T-cell (primary cell): ENCODE measurements at regions of chr16 and their contacts with region 1.

Region 1: DNA sequence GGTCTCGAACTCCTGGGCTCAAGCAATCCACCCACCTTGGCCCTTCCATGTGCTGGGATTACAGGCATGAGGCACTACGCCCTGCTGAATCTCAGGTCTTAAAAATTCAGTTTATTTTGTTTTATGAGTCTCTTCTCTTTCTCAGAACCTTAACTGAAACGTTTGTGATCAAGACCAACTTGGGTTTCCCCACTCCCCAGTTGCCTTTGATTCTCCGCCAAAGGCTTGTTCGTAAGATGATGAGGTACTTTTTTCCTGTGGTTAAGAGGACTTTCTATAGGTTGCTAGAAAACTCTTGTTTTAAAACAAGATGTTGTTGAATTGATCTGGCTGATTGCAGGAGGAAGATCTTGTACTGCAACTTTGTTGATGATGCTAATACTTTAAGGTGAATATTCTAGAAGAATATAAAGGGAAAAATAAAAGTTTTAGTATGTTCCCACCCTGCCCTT is 11.7 kb downstream of the ABCC1 start:
- DNase-seq: peak; percentile 19 to 93 (median 77)
- ATAC-seq: peak; percentile 87 to 94 (median 92)
- H3K4me3 ChIP-seq: peak overlapping the region; percentile 27 to 36
- H3K4me3 Mint-ChIP-seq: peak overlapping the region; percentile 56 to 87 (median 76)
- H3K27ac ChIP-seq: peak overlapping the region; percentile 91
- H3K27ac Mint-ChIP-seq: peak overlapping the region; percentile 96 to 99
- H3K4me1 ChIP-seq: peaks cover 24 to 68% of the 10 kb centered on the region in 2 experiments
- H3K4me1 Mint-ChIP-seq: peaks cover 85 to 88% (median 85%) of the 10 kb centered on the region in 3 donors
- H3K27me3 ChIP-seq: no peaks in the 10 kb centered on the region
- H3K27me3 Mint-ChIP-seq: no peaks in the 10 kb centered on the region

Region 2: DNA sequence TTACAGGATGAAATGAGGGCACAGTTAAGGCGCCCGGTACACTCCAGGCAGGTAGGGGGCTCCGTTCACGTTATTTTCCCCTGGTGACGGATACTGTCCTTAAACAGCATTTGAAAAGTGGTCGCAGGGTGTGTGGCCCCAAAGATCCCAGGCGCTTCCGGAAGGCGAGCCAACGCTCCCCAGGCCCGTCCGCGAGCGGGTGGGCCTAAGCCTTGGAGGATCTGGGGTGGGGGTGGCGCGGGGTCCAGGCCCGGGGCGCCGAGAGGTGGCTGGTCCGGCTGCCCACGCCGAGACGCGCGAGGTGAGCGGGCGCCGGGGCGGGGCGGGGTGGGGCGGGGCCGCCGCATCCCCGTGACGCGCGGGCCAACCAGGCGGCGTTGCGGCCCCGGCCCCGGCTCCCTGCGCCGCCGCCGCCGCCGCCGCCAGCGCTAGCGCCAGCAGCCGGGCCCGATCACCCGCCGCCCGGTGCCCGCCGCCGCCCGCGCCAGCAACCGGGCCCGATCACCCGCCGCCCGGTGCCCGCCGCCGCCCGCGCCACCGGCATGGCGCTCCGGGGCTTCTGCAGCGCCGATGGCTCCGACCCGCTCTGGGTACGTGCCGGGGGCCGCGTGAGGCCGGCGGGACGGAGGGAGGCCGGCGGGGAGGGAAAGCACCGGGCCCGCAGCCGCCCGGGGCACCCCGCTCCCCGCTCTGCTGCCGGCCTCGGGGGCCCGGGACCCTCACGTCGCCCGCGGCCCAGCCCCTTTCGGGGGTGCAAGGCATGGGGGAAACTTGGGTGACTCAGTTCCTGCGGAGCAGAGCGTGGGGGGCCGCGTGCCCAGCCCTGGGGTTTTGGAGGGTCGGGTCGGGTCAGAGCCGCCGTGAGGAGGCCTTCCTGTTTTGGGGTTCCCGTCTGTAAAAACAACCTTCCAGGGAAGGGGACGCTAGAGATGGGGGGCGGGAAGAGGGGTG is 11.6 kb before region 1 on chr16 and contains the start of gene ABCC1:
- CTCF ChIA-PET with region 1: interaction called in 1 of 2 experiments, 3 read pairs
- POLR2A ChIA-PET with region 1: interaction called in 1 of 2 experiments, 21 read pairs
- DNase-seq: peak; percentile 8 to 81 (median 45)
- ATAC-seq: peak; percentile 75 to 88 (median 87)
- H3K4me3 ChIP-seq: peak within 1 kb of the TSS; percentile 76 to 87
- H3K4me3 Mint-ChIP-seq: peak within 1 kb of the TSS; percentile 90 to 97 (median 90)
- H3K27ac ChIP-seq: peak within 1 kb of the TSS; percentile 86
- H3K27ac Mint-ChIP-seq: peak within 1 kb of the TSS; percentile 94 to 95
- H3K4me1 ChIP-seq: peaks cover 12 to 43% of the 10 kb centered on the region in 2 experiments
- H3K4me1 Mint-ChIP-seq: peaks cover 40 to 46% (median 43%) of the 10 kb centered on the region in 3 donors
- H3K27me3 ChIP-seq: no peaks in the 10 kb centered on the region
- H3K27me3 Mint-ChIP-seq: no peaks in the 10 kb centered on the region
- total RNA-seq, gene ABCC1: 59.4 to 68.1 (median 63.0) TPM

Region 3: DNA sequence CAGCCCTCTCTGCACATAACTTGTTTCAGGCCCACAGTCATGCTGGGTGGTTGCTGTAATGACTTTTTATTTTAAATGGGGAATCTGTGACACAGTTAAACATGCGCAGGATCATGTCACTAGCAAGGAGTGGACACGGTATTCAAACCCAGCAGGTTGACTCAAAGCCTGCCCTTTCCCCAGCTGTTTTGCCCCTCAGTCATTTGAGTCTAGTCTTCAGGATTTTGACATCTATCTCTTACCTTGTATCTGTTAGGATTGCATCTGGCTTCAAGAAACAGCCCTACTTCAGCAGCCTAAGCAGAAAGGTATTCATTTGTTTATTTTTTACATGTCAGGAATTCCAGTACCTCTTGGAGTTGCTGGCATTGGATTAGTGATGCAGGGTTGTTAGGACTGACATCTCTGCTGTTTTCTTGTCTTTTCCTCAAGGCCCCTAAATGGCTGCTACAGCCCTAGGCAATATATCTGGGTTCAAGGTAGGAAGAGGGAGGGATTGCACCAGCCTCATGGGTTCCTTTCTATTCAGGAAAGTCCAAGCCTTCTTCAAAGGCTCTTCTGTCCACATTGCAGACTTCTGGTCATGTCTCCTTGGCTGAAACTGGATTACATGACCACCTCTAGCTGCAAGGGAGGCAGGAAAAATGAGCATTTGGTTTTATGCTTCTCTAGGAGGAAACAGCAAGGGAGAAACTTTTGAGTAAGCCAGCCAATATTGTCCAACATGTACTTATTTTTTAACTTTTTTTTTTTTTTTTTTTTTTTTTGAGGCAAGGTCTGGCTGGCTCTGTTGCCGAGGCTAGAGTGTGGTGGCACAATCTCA is 11.2 kb after region 1 on chr16:
- CTCF ChIA-PET with region 1: no interaction called
- POLR2A ChIA-PET with region 1: interaction called in 1 of 2 experiments, 12 read pairs
- DNase-seq: no peak
- ATAC-seq: no peak
- H3K4me3 ChIP-seq: no peak overlapping the region
- H3K4me3 Mint-ChIP-seq: no peak overlapping the region
- H3K27ac ChIP-seq: no peak overlapping the region
- H3K27ac Mint-ChIP-seq: no peak overlapping the region
- H3K4me1 ChIP-seq: peaks cover 0 to 10% of the 10 kb centered on the region in 2 experiments
- H3K4me1 Mint-ChIP-seq: peaks cover 39 to 62% (median 41%) of the 10 kb centered on the region in 3 donors
- H3K27me3 ChIP-seq: no peaks in the 10 kb centered on the region
- H3K27me3 Mint-ChIP-seq: no peaks in the 10 kb centered on the region

Region 4: DNA sequence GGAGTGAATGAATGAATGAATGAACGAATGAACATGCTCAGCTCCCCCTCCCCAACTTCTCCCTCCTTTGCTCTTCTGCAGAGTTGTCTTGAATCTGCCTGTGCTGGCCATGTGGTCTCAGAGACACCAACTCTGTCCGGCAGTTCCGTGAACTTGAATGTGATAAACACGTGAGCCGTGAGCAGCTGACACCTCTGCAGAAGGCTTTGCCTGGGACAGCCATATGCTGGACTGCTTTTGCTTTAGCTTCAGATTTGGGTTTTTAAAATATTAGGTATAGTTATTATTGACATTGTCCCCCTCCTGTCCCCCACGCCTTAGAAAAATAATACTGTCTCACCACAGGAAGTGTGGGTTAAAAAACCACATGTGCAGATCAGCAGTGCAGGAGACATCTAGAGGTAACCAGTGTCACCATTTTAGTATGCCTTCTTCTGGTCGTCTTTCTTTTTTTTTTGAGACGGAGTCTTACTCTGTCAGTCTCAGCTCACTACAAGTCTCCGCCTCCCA is 72.2 kb after region 1 on chr16:
- CTCF ChIA-PET with region 1: interaction called in 1 of 2 experiments, 3 read pairs
- POLR2A ChIA-PET with region 1: interaction called, 3 to 10 read pairs
- DNase-seq: peak in 21 of 35 experiments; percentile 3 to 70 (median 9)
- ATAC-seq: peak; percentile 70 to 89 (median 84)
- H3K4me3 ChIP-seq: no peak overlapping the region
- H3K4me3 Mint-ChIP-seq: peak overlapping the region in 1 of 3 donors; percentile 49
- H3K27ac ChIP-seq: peak overlapping the region; percentile 55
- H3K27ac Mint-ChIP-seq: peak overlapping the region; percentile 55 to 88
- H3K4me1 ChIP-seq: peaks cover 0 to 19% of the 10 kb centered on the region in 2 experiments
- H3K4me1 Mint-ChIP-seq: peaks cover 19 to 27% (median 21%) of the 10 kb centered on the region in 3 donors
- H3K27me3 ChIP-seq: no peaks in the 10 kb centered on the region
- H3K27me3 Mint-ChIP-seq: no peaks in the 10 kb centered on the region